ENCODE measurements at regions of chr3 and their contacts with region 1.

Region 1: DNA sequence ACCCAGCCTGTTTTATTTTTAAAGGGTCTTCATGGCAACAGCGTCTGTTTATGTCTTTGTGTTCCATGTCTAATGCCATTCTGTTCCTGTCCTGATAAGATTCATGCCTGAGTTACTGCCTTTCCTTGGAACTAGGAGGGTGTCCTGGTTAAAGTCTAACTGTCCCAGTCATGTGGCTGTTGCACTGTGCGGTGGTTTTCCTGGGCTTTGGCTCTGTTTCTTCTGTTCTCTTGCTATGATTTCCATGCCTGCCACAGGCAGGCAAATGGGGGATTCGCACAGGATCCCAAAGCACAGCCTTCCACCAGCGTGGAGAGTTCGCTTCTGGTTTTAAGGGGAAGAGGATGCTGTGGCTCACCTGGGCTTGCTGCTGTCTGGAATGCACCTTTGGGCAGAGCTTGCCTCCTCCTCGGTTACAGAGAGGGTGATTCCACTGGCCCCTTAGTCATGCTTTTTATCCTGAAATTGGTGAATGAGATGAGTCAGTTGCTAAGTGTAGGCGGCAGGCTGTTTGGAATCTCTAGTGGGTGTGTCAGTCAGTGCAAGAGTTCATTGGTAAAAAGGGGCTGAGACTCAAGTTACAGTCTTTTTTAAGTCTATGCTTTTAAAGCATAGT is 86.8 kb downstream of the CCK start:
- DNase-seq: peak in 1 of 5 donors; percentile 50
- ATAC-seq: peak; percentile 71 to 87 (median 83)
- H3K4me3 ChIP-seq: peak overlapping the region in 1 of 12 donors; percentile 1
- H3K27ac ChIP-seq: peak overlapping the region; percentile 48 to 86 (median 75)
- H3K4me1 ChIP-seq: peaks cover 4 to 94% (median 43%) of the 10 kb centered on the region in 12 donors
- H3K27me3 ChIP-seq: no peaks in the 10 kb centered on the region
- CTCF ChIP-seq: no peak
- POLR2A ChIP-seq: no peak

Region 2: DNA sequence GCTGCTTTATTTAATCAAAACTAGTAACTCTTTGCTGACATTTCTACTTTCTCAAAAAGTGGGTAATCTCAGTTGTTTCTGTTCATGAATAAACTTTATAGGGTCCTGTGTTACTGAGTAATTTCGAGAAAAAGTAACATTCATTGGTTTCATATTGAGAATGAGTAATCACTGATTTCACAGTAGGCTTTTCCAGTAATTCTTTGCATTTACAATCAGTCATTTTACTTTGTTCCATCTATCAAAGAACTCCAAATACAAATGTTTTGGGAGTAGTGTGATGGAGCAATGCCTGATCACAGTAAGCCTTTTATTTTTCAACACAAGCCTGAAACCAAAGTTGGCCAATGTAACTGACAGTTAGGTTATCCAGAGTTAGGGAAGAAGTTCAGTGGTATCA is 570.9 kb before region 1 on chr3:
- intact Hi-C with region 1: loop called in 1 of 10 experiments (anchors 5 kb)
- DNase-seq: no peak
- ATAC-seq: no peak
- H3K4me3 ChIP-seq: no peak overlapping the region
- H3K27ac ChIP-seq: no peak overlapping the region
- H3K4me1 ChIP-seq: no peaks in the 10 kb centered on the region
- H3K27me3 ChIP-seq: no peaks in the 10 kb centered on the region
- CTCF ChIP-seq: no peak
- POLR2A ChIP-seq: no peak

Region 3: GRCh38 chr3:42129014-42129953 is 49.9 kb before region 1 on chr3:
- intact Hi-C with region 1: loop called in 1 of 10 experiments (anchors 5 kb)
- DNase-seq: no peak
- ATAC-seq: peak in 3 of 4 donors; percentile 68 to 82 (median 80)
- H3K4me3 ChIP-seq: no peak overlapping the region
- H3K27ac ChIP-seq: no peak overlapping the region
- H3K4me1 ChIP-seq: peaks cover 0 to 25% (median 7%) of the 10 kb centered on the region in 12 donors
- H3K27me3 ChIP-seq: no peaks in the 10 kb centered on the region
- CTCF ChIP-seq: no peak
- POLR2A ChIP-seq: no peak

Region 4: DNA sequence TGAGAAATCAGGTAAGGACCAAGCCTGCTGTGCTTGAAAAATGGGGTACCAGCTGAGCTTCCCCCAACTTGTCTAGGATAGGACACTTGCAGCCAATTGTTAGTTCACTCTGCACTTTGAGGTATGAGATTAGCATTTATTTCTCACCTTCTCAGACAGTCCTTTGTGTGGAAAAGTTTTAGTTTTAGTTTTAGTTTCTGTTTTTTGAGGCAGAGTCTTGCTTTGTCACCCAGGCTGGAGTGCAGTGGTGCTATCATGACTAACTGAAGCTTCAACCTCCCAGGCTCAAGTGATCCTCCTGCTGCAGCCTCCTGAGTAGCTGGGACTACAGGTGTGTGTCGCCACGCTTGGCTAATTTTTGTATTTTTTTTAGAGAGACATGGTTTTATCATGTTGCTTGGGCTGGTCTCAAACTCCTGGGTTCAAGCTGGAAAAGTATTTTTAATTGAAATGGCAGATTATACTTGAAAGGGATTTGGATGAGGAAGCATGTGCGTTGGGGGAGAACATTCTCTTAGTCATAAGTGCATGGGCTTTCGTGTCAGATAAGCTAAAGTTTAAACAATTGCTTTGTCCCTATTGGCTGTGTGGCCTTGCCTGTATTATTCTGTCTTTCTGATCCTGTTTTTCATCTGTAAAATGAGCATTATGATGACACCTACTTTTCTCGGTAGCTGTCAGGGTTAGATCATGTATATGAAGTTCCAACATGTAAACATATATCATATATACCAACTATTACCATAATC is 111.9 kb after region 1 on chr3:
- intact Hi-C with region 1: no loop called
- DNase-seq: no peak
- ATAC-seq: no peak
- H3K4me3 ChIP-seq: no peak overlapping the region
- H3K27ac ChIP-seq: no peak overlapping the region
- H3K4me1 ChIP-seq: no peaks in the 10 kb centered on the region
- H3K27me3 ChIP-seq: peaks cover 0 to 12% (median 0%) of the 10 kb centered on the region in 9 donors
- CTCF ChIP-seq: no peak
- POLR2A ChIP-seq: no peak

Region 5: GRCh38 chr3:43394041-43394554 is 1214.9 kb after region 1 on chr3:
- intact Hi-C with region 1: no loop called
- DNase-seq: peak; percentile 81 to 89 (median 87)
- ATAC-seq: peak; percentile 74 to 93 (median 82)
- H3K4me3 ChIP-seq: no peak overlapping the region
- H3K27ac ChIP-seq: peak overlapping the region; percentile 8 to 83 (median 73)
- H3K4me1 ChIP-seq: peaks cover 0 to 56% (median 28%) of the 10 kb centered on the region in 12 donors
- H3K27me3 ChIP-seq: no peaks in the 10 kb centered on the region
- CTCF ChIP-seq: no peak
- POLR2A ChIP-seq: no peak